ENCODE measurements at regions of chr18 and their contacts with region 1.

Region 1: DNA sequence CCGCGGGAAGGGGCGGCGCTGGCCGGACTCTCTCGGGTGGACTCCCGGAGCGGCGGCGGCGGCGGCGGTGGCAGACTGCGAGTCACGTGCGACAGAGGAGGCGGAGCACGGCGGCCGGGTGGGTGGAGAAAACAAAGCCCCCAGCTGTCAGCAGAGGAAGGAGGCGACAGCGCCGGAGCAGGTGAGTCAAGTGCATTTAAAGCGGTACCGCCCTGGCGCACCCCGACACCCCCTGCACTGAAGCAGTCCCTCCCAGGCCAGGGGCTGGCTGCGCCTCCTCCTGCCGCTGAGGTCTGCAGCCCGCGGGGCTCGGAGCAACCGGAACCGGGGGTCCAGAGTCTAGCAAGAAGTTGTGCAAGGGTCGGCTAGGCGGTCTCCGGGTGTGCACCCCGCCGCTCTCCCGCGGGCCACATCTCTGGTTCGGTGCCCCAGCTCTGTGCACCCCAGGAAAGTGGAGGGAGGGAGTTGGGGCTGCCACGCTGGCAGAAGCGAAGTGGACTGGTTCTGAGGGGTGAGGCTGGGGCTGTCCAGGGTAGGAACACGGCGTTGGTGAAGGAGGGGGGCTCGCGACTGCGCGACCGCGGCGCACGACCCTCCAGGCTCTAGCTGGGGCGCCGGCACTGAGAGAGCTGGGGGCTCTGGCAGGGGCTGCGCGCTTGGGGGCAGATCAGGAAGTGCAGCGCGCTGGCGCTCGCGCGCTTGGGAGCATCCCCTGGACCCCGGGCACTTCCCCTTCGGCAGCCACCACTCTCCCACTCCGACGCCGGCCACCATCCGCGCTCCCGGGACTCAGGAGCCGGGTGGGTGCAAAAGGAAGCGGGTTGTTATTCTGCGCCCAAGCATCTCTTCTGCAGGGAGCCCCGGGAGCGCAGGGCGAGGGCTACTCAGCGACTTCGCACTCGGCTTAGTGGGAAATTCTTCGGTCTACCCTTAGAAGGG is 64.0 kb upstream of the MAPRE2 start:
- DNase-seq: peak; percentile 82
- ATAC-seq: peak; percentile 80 to 85

Region 2: GRCh38 chr18:34880882-34881834 is 96.0 kb before region 1 on chr18:
- intact Hi-C with region 1: loop called in 1 of 2 experiments (anchors 10 kb)
- DNase-seq: no peak
- ATAC-seq: peak; percentile 72 to 74